ENCODE measurements at regions of chr19 and their contacts with region 1.

Region 1: DNA sequence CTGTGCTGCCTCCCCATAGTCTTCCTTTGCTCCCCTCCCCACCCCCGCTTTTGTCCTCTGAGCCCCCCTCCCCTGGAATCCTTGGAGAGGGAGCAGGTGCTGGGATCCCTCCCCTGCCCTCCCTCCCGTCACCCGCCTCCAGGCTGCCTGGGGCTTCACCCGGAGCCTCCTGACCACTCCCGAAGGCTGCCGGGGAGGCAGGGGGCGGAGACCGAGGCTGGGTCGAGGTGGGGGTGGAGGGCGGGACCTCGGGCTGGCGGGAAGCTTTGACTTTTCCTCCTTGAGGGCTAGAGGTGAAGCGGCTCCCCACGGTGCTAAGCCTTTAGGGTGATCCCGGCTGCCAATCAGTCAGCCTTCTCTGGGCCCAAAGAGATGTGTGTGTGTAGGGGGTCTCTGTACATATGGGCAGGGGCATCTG is 1.5 kb downstream of the KMT5C start:
- DNase-seq: peak; percentile 33
- H3K4me3 ChIP-seq: peak overlapping the region; percentile 51 to 88
- H3K27ac ChIP-seq: peak overlapping the region in 1 of 2 donors; percentile 84
- H3K4me1 ChIP-seq: peaks cover 3% of the 10 kb centered on the region
- H3K27me3 ChIP-seq: no peaks in the 10 kb centered on the region
- CTCF ChIP-seq: no peak
- POLR2A ChIP-seq: peak; percentile 11

Region 2: DNA sequence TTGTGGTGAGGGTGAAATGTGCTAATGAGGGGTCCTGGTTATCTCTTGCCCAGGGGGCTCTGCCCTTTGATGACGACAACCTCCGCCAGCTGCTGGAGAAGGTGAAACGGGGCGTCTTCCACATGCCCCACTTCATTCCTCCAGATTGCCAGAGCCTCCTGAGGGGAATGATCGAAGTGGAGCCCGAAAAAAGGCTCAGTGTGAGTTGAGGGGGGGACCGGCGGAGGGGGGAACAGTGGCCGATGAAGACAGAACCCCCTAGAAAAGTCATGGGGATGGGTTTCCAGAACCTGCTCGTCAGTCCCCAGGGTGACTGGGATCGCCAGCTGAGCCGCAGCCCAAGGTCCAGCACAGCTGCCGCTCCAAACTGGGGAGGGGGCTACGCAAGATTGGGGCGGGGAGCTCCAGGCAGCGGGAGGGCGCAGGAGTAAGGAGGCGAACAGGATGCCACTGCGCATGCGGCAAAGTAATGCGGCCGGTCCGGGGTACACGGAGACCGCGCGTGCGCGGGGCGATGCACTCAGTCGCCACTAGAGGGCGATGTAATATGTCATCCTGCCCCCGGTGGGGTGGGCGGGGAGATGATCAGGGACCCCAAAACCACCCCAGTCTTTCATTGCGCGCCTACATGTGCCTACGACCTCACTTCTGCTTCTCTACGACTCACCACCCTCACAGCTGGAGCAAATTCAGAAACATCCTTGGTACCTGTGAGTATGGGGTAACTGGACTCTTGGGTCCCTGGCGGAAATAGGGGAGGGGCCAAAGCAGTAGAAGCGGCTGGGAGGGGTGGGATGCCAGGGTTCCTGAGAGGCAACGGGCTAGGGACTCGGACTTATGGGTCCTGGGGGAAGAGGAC is 39.5 kb before region 1 on chr19:
- intact Hi-C with region 1: loop called (anchors 5 kb)
- DNase-seq: peak; percentile 78
- H3K4me3 ChIP-seq: peak overlapping the region in 1 of 2 donors; percentile 25
- H3K27ac ChIP-seq: no peak overlapping the region
- H3K4me1 ChIP-seq: no peaks in the 10 kb centered on the region
- H3K27me3 ChIP-seq: no peaks in the 10 kb centered on the region
- CTCF ChIP-seq: peak; percentile 95 to 99 (median 98)
- POLR2A ChIP-seq: peak; percentile 13

Region 3: DNA sequence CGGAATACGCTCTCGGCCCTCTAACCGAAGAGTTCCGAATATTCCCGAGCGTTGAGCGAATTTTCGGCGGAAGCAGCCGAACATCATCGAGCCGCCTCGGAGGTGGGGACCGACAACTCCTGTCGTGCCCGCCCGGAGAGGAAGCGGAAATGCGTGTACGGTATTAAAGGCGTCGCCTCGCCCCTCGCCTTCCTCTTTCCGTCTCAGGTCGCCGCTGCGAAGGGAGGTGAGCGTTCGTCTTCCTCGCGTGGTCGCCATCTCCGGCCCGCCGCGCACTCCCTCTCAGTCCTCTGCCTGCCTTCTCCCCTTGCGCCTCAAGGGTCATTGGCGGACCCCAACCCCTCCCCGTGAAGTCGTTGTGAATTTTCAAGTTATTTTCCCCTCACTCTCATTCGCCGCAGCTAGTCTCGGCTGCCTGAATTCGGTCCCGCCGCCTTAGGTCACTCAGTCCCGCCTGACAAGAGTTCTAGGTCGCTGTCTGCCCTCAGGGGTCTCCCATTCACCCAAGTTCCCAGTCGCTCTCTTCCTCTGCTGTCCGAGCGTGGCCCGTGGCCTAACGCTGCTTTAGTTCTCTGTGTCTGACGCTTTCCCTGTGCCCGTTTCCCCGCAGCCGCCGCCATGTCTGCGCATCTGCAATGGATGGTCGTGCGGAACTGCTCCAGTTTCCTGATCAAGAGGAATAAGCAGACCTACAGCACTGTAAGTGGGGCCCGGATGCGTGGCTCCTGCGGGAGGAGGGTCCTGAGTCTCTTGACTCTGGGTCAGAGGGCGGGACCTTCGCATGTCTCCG is 44.8 kb after region 1 on chr19 and contains the start of gene RPL28:
- intact Hi-C with region 1: loop called (anchors 5 kb)
- DNase-seq: peak; percentile 99
- H3K4me3 ChIP-seq: peak within 1 kb of the TSS; percentile 74 to 78
- H3K27ac ChIP-seq: peak within 1 kb of the TSS; percentile 93 to 96
- H3K4me1 ChIP-seq: peaks cover 30% of the 10 kb centered on the region
- H3K27me3 ChIP-seq: no peaks in the 10 kb centered on the region
- CTCF ChIP-seq: peak in 1 of 4 experiments; percentile 6
- POLR2A ChIP-seq: peak; percentile 99
- total RNA-seq, gene RPL28: 439 to 554 TPM